ENCODE measurements at regions of chr14 and their contacts with region 1.

Region 1: GRCh38 chr14:73713803-73714655 is at the start of gene PNMA1:
- DNase-seq: peak; percentile 67 to 94 (median 87)
- ATAC-seq: peak; percentile 72
- H3K4me3 ChIP-seq: peak within 1 kb of the TSS; percentile 71 to 92
- H3K4me3 Mint-ChIP-seq: peak within 1 kb of the TSS; percentile 92
- H3K27ac ChIP-seq: peak within 1 kb of the TSS; percentile 76 to 77
- H3K27ac Mint-ChIP-seq: peak within 1 kb of the TSS; percentile 96
- H3K4me1 ChIP-seq: peaks cover 10% of the 10 kb centered on the region
- H3K4me1 Mint-ChIP-seq: peaks cover 34% of the 10 kb centered on the region
- H3K27me3 ChIP-seq: no peaks in the 10 kb centered on the region
- H3K27me3 Mint-ChIP-seq: no peaks in the 10 kb centered on the region
- CTCF ChIP-seq: no peak
- total RNA-seq, gene PNMA1: 39.4 to 39.8 TPM

Region 2: DNA sequence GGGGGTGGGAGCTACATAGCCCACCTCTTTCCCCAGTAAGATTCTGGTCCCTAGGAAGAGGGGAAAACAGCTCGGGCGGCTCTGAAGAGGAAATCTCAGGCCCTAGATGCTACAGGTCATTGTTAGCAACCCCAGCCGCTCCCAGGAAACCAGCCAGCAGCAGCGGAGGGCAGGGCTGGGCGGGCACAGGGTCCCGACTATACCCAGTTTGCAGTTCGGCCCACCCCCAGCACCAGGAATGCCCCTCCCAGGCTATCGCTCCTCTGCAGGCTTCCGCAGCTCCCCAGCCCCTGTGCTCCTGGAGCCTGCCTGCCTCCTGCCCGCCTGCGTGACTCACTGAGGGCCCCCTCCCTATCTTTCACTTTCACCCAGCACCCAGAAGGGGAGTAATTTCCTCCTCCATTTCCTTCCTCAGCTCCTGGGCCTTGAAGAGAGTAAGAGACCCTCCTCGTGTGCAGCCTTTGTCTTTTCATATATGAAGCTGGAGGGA is 27.4 kb after region 1 on chr14:
- CTCF ChIA-PET with region 1: interaction called, 3 read pairs
- POLR2A ChIA-PET with region 1: interaction called, 5 read pairs
- intact Hi-C with region 1: loop called in 1 of 2 experiments (anchors 1 kb)
- DNase-seq: peak in 7 of 9 experiments; percentile 61 to 86 (median 75)
- ATAC-seq: peak; percentile 79
- H3K4me3 ChIP-seq: peak overlapping the region; percentile 25 to 42
- H3K4me3 Mint-ChIP-seq: peak overlapping the region; percentile 80
- H3K27ac ChIP-seq: peak overlapping the region; percentile 29 to 83
- H3K27ac Mint-ChIP-seq: peak overlapping the region; percentile 94
- H3K4me1 ChIP-seq: peaks cover 82% of the 10 kb centered on the region
- H3K4me1 Mint-ChIP-seq: peaks cover 74% of the 10 kb centered on the region
- H3K27me3 ChIP-seq: no peaks in the 10 kb centered on the region
- H3K27me3 Mint-ChIP-seq: no peaks in the 10 kb centered on the region
- CTCF ChIP-seq: no peak

Region 3: GRCh38 chr14:74771399-74771798 is 1057.4 kb after region 1 on chr14:
- CTCF ChIA-PET with region 1: no interaction called
- POLR2A ChIA-PET with region 1: no interaction called
- intact Hi-C with region 1: no loop called
- DNase-seq: no peak
- ATAC-seq: no peak
- H3K4me3 ChIP-seq: no peak overlapping the region
- H3K4me3 Mint-ChIP-seq: no peak overlapping the region
- H3K27ac ChIP-seq: no peak overlapping the region
- H3K27ac Mint-ChIP-seq: peak overlapping the region; percentile 10
- H3K4me1 ChIP-seq: peaks cover 35% of the 10 kb centered on the region
- H3K4me1 Mint-ChIP-seq: peaks cover 69% of the 10 kb centered on the region
- H3K27me3 ChIP-seq: no peaks in the 10 kb centered on the region
- H3K27me3 Mint-ChIP-seq: no peaks in the 10 kb centered on the region
- CTCF ChIP-seq: no peak